ENCODE measurements at regions of chr13 and their contacts with region 1.

Region 1: GRCh38 chr13:79480954-79481684 is at the start of gene NDFIP2:
- DNase-seq: peak; percentile 90
- ATAC-seq: peak; percentile 95 to 97
- total RNA-seq, gene NDFIP2: 30.9 to 39.0 TPM

Region 2: DNA sequence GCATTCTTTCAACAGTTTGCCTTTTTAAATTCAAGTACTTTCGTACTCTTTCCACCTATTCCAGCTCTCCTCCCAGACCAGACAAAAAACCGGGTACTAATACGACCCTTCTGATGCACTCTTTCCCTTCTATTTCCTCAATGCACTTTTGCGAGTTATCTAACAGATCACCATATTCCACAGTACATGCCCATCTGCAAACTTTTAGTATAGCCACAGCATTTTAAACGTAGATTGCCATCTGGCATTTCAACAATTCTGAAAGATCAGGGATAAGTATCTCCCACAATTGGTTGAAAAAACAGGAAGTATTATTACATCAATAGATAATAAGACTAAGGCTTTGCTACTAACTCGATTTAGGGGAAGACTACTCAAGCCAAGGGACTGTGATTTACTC is 106.5 kb before region 1 on chr13:
- intact Hi-C with region 1: no loop called
- DNase-seq: no peak
- ATAC-seq: no peak

Region 3: DNA sequence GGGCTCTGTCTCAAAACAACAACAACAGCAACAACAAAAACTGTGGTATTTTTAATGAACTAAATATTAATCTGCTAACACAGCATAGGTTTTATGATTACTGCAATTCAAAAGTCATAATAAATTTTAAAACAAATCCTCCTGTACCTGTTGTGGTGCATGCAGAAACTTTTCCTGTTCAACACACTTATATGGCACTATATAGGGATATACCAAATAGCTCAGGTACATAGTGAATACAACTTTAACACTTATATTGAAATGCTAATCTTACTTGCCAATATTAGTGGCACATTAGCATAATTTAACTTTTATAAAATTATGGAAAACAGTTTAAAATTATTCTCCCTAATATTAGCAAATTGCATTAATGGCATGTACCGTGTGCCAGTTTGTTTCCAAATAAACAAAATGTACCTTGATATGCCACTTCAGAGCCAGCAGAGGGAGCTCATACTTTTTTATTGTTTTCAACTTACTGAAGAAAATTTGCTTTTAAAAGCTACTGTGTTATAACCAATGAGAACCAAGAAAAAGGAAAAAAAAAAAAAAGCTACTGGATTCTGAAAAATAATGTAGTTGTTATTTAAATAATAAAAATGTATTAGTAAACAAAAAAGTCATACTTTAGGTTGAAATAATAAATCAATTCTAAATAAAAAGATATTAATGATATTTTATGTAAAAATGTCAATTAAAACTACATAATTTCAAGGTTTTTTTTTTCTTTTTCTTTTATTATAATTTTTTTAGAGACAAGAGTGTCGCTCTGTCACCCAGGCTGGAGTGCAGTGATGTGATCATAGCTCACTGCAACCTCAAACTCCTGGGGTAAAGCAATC is 57.1 kb before region 1 on chr13:
- intact Hi-C with region 1: loop called in 1 of 2 experiments (anchors 5 kb)
- DNase-seq: no peak
- ATAC-seq: peak in 1 of 2 donors; percentile 59

Region 4: DNA sequence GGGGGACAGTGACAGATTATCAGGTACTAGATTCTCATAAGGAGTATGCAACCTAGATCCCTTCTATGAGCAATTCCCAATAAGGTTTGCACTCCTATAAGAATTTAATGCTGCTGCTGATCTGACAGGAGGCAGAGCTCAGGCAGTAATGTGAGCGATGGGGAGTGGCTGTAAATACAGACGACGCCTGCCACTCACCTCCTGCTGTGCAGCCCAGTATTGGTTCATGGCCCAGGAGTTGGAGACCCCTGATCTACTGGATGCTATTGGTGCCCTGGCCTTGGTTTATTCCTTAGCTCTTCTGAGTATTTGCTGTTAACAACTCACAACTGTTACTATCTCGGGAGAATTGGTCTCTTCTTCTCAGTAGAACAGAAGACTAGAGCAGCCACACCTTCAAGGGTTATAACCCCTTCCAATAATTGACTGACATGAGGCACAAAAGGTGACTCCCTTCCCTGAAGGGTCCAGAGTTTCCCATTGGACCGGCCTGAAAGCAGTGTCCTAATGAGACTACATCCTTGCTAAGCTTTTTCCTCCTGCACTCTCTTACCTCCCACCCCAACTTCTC is 40.1 kb before region 1 on chr13:
- intact Hi-C with region 1: loop called in 1 of 2 experiments (anchors 5 kb)
- DNase-seq: no peak
- ATAC-seq: no peak

Region 5: DNA sequence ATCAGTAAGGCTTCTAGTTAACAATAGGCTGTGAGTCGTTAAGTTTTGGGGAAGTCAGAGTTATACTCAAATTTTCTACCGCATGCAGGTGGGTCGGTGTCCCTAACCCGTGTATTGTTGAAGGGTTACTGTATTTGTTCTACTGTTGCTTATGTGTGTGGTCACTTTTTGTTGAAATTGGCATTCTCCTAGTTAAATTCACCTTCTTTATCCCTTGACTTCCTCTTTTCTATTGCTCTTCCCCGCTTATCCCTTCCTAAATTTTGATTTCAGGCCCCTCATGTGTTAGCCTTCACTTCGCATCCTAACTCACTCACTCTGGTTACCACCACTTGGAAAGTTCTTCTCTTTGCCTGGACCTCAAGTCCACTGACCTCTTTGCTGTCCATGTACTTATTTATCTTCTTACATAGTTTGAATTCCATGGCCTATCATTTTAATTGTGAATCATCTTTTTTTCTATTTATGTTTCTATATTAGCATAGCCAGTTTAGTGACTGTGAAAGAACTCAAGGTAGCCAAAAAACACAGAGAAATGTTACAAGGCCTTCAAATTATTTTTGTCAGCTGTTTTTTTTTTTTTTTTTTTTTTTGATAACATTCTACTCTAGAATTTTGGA is 52.8 kb after region 1 on chr13:
- intact Hi-C with region 1: loop called in 1 of 2 experiments (anchors 5 kb)
- DNase-seq: no peak
- ATAC-seq: peak in 1 of 2 donors; percentile 22